A549 (cell line): ENCODE measurements at regions of chr3 and their contacts with region 1.

Region 1: GRCh38 chr3:52817236-52817635 is 13.2 kb downstream of the ITIH4 start:
- DNase-seq: no peak
- ATAC-seq: no peak
- H3K4me3 ChIP-seq: no peak overlapping the region
- H3K27ac ChIP-seq: no peak overlapping the region
- H3K4me1 ChIP-seq: no peaks in the 10 kb centered on the region
- CTCF ChIP-seq: no peak
- EP300 ChIP-seq: no peak
- POLR2A ChIP-seq: no peak
- RAD21 ChIP-seq: no peak

Region 2: DNA sequence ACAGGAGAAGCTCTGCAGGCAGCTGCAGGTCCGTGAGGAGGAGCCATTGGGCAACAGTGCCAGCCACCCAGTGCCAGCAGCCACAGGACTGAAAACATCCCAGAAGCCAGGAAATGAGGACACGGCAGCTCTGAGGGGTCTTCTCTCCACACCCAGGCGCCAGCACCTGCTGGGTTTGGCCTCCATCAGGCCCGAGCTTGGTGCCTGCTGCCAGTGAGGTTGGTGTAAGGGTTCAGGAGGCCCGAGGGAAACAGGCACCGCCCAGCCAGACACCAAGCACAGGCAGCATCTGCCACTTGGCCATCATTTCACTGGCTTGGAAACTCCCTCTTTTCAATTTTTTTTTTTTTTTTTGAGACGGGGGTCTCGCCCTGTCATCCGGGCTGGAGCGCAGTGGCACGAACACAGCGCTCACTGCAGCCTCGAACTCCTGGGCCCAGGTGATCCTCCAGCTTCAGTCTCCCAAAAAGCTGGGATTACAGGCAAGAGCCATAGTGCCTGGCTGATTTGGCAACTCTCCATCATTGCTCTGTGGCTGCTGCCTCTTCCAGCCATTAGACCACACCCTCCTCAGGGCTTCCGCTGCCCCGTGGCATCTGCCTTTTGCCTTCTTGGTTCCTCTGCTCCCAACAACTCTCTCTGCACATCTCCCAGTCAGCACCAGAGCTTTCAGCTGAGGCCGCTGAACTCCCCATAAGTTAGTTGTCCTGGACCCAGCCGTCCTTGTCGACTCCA is 24.1 kb before region 1 on chr3:
- CTCF ChIA-PET with region 1: interaction called, 11 read pairs
- POLR2A ChIA-PET with region 1: no interaction called
- DNase-seq: no peak
- ATAC-seq: no peak
- H3K4me3 ChIP-seq: no peak overlapping the region
- H3K27ac ChIP-seq: no peak overlapping the region
- H3K4me1 ChIP-seq: no peaks in the 10 kb centered on the region
- CTCF ChIP-seq: no peak
- EP300 ChIP-seq: no peak
- POLR2A ChIP-seq: no peak
- RAD21 ChIP-seq: no peak

Region 3: DNA sequence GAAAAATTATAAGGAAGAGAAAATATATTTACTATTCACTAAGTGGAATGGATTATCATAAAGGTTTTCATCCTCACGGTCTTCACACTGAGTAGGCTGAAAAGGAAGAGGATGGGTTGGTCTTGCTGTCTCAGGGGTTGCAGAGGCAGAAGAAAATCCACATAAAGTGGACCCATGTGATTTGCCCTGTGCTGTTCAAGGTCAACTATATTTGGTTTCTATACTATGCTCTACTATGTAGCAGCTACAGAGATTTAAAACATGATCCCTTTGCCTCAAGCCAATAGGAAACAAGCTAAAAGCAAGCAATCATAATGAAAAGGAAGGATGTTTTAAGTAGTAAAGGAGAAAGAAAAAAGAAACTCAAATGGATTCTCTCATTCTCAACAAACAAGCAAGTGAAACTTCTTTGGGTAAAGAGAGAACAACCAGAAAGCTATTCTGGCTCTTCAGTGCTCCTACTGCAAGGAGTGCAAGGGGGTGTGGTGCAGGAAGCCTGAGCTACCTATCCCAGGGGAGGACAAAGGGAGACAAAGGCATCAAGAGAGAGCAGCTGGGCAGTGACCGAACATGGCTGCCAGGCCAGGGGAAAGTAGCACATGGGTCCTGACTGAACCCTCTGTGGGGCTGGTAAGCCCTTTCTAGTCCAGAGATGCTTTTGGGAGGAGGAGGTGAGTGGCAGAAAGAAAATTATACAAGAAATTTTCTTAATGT is 192.7 kb after region 1 on chr3:
- CTCF ChIA-PET with region 1: no interaction called
- POLR2A ChIA-PET with region 1: no interaction called
- DNase-seq: no peak
- ATAC-seq: no peak
- H3K4me3 ChIP-seq: no peak overlapping the region
- H3K27ac ChIP-seq: no peak overlapping the region
- H3K4me1 ChIP-seq: peaks cover 8% of the 10 kb centered on the region; the same call in 1 of the 3 replicates
- CTCF ChIP-seq: no peak
- EP300 ChIP-seq: no peak
- POLR2A ChIP-seq: no peak
- RAD21 ChIP-seq: no peak